A673 (cell line): ENCODE measurements at regions of chr6 and their contacts with region 1.

Region 1: DNA sequence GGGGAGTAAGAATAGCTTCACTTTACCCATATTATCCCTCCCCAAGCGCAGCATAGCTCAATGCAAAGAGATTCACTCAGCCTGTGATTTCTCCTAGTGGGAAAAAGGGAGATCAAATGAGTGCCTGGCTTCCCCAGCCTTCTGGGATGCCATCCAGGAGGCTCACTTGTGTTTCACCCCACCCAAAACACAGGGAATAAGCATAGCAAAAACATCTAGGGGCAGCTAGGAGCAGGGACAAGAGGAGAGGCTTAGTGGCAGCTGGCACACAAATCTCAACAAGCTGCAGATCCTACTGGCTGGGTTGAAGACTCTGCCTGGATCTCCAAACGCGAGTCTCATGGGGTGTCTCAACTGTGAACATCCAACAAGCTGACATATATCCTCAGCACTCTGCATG is 715.8 kb downstream of the RNF144B start:
- DNase-seq: no peak
- H3K4me3 ChIP-seq: no peak overlapping the region
- H3K27ac ChIP-seq: no peak overlapping the region
- H3K4me1 ChIP-seq: no peaks in the 10 kb centered on the region
- H3K27me3 ChIP-seq: no peaks in the 10 kb centered on the region
- CTCF ChIP-seq: no peak

Region 2: DNA sequence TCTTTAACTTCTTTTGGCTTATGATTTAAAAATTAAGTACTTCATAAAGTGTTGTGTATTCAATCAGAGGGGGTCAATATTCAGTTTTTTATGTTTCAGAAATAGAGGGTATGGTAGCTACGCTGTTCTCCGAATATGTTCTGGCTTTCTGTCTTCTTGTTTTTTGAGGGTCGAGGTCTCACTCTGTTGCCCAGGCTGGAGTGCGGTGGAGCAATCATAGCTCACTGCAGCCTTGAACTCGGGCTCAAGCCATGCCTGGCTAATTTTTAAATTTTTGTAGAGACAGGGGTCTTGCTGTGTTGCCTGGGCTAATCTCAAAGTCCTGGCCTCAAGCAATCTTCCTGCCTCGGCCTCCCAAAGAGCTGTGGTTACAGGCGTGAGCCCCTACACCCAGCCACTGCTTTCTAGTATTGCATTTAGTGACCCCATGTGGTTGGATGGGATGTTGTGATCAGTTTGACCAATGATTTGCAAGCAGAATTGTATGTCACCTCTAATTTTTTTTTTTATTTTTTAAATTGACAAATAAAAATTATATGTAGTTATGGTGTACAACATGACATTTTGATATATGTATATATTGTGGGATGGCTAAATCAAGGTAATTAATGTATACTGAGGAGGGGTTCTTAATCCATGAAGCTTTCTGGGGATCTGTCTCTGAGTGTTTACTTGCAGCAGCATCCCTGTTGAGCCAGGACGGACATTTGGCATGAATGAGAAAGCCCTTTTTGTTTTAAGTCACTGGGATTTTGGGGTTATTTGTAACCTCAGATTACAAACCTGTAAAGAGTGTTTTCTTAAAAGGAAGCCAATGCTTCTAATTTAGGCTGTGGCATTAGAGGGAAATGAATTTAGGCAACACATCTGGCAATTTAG is 800.1 kb before region 1 on chr6:
- CTCF ChIA-PET with region 1: no interaction called
- POLR2A ChIA-PET with region 1: interaction called, 12 read pairs
- intact Hi-C with region 1: no loop called
- DNase-seq: peak; percentile 24
- H3K4me3 ChIP-seq: no peak overlapping the region
- H3K27ac ChIP-seq: no peak overlapping the region
- H3K4me1 ChIP-seq: no peaks in the 10 kb centered on the region
- H3K27me3 ChIP-seq: no peaks in the 10 kb centered on the region
- CTCF ChIP-seq: peak; percentile 33; the same call in 1 of the 2 replicates